Posterior vena cava (tissue), 2 donors: ENCODE measurements at regions of chr3 and their contacts with region 1.

Region 1: DNA sequence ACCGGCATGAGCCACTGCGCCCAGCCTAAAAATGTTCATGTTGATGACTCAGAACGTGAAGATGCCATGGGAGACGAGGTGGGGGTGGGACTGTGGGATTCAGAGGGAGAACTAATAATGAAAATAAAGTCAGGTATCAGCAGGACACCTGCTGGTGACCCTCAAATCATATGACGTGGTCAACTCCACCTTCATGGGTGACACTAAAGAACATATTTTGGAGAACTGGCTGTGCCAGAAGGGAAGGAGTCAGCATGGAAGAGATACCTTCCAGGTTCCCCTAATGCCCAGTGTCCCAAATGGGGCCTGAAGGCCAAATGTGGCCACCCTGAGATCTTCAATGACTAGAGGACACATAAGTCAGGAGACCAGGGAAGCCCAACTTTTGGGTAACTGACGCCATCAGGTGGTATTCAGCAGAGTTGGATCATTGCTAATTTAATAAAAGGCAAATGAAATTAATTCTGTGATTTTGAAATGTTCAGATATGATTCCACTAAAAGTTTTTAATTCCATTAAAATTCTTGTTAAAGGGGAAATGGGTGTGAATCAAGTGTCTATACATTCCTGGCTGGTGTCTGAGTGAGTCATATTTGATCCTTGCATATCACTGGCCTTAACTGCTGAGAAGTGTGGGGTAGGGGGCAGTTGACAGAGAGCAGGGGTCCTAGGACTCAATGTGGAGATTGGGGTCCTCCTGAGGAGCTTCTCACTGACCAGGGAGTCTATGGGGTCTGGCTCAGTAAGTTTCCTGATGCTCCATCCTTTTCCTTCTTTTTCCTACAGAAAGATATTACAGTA is 88.7 kb upstream of the GSK3B start:
- DNase-seq: no peak

Region 2: DNA sequence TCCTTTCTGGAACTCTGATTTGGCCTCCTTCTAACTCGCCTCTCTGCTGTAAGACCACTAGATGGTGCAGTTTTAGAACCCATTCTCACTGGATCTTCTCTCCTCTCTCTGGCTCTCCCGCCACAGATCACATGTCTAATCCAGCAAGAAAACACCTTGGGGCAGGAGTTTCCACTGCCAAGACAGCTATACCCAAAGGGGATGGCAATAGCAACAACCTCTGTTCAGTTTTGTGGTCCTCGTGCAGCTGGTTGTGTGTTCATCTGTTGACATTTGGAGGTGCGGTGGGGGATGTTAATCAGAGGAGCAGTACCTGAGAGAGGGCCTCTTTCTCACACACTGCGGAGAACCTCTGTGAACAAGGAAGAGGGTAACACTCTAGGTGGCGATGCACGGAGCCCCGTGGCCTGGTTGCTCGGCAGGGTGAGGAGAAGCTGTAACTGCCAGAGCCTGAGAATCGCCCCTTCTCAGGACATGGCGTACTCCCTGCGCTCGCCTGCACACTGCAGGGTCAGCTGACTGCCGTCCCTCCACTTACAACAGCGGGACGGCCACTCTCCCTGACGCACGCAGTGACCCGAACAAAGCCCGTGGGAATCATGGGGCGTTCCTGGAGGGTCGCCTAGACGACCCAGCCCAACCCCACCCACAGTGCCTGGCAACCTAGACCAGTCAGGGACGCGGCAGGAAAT is 1037.3 kb before region 1 on chr3 and contains the start of gene TEX55:
- intact Hi-C with region 1: loop called in 1 of 2 experiments (anchors 5 kb)
- DNase-seq: peak; percentile 79
- total RNA-seq, gene TEX55: not detected

Region 3: DNA sequence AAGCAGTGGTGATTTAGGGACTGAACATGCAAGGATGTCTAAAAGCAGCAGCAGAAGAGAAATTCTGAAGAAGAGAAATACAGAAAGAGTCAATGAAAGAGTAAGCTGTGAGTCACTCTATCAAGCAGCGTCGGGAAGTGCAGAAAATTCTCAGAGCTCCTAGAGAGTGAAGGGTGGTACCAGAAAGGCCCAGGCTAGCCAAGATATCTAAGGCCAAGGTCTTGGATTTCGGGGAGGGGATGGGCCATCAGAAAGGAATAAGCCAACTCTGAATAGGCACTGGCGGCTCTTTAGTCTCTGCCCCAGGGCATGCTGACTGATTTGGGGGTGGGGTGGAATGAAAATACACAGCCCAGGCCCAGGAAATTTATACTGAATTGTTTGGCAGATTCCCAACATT is 31.2 kb after region 1 on chr3:
- intact Hi-C with region 1: no loop called
- DNase-seq: no peak